HCT116 (cell line): ENCODE measurements at regions of chr22 and their contacts with region 1.

Region 1: DNA sequence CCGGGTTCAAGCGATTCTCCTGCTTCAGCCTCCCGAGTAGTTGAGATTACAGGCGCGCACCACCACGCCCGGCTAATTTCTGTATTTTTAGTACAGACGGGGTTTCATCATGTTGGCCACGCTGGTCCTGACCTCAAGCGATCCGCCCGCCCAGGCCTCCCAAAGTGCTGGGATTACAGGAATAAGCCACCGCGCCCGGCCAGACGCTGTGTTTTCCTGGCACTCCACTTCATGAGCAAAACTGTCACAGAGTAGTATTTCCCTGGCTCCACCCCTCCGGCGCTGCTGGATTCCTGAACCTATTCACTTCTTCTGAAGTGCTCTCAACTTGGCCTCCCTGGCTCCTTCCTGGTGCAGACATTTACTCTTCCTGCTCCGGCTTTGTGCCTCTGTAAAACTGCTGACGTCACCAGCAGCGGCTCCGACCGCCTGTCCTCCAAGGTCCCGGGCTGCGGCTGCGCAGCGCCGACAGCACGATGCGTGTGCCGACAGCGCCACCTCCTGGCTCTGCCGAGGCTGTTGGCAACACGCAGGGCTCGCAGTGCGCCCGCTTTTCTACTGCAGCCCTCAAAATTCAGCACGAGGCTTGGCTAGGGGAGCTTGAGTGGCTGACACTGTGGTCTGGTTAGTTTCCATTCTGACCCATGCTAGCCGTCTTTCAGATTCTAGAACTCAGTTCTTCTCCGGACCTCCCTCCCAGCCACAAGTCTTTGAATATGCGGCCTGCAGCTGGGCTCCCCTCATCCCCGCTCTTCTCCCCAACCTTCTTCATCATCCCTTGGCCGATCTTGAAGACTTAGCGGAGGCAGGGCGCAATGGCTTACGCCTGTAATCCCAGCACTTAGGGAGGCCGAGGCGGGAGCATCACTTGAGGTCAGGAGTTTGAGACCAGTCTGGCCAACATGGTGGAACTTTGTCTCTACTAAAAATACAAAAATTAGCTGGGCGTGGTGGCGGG is 36.6 kb downstream of the APOL3 start:
- DNase-seq: peak; percentile 83
- ATAC-seq: peak; percentile 98
- H3K4me3 ChIP-seq: peak overlapping the region in 1 of 2 experiments; percentile 33; a peak in 1 of 4 replicates
- H3K27ac ChIP-seq: peak overlapping the region; percentile 17; the same call in 1 of the 2 replicates
- H3K4me1 ChIP-seq: peaks cover 2 to 10% of the 10 kb centered on the region in 2 experiments; a peak in 3 of 4 replicates
- H3K27me3 ChIP-seq: peaks cover 3% of the 10 kb centered on the region
- CTCF ChIP-seq: peak; percentile 93 to 98 (median 96)
- POLR2A ChIP-seq: peak; percentile 33
- RAD21 ChIP-seq: peak; percentile 99

Region 2: GRCh38 chr22:35430897-35431322 is 693.0 kb before region 1 on chr22:
- CTCF ChIA-PET with region 1: interaction called, 3 read pairs
- POLR2A ChIA-PET with region 1: no interaction called
- RAD21 ChIA-PET with region 1: no interaction called
- intact Hi-C with region 1: loop called (anchors 10 kb)
- DNase-seq: peak; percentile 32
- ATAC-seq: peak; percentile 88
- H3K4me3 ChIP-seq: no peak overlapping the region
- H3K27ac ChIP-seq: peak overlapping the region; percentile 13; the same call in 1 of the 2 replicates
- H3K4me1 ChIP-seq: peaks cover 11 to 14% of the 10 kb centered on the region in 2 experiments
- H3K27me3 ChIP-seq: no peaks in the 10 kb centered on the region
- CTCF ChIP-seq: peak; percentile 75 to 98 (median 94)
- POLR2A ChIP-seq: no peak
- RAD21 ChIP-seq: peak; percentile 88

Region 3: GRCh38 chr22:35761037-35761436 is 362.9 kb before region 1 on chr22:
- CTCF ChIA-PET with region 1: no interaction called
- POLR2A ChIA-PET with region 1: no interaction called
- RAD21 ChIA-PET with region 1: no interaction called
- intact Hi-C with region 1: loop called (anchors 5 kb)
- DNase-seq: peak; percentile 8
- ATAC-seq: peak; percentile 58; the same call in 1 of the 2 replicates
- H3K4me3 ChIP-seq: no peak overlapping the region
- H3K27ac ChIP-seq: no peak overlapping the region
- H3K4me1 ChIP-seq: no peaks in the 10 kb centered on the region
- H3K27me3 ChIP-seq: no peaks in the 10 kb centered on the region
- CTCF ChIP-seq: peak in 2 of 3 experiments; percentile 19 to 35; a peak in 2 of 6 replicates
- POLR2A ChIP-seq: no peak
- RAD21 ChIP-seq: peak; percentile 56

Region 4: GRCh38 chr22:35930933-35931332 is 193.0 kb before region 1 on chr22:
- CTCF ChIA-PET with region 1: interaction called, 12 read pairs
- POLR2A ChIA-PET with region 1: no interaction called
- RAD21 ChIA-PET with region 1: interaction called, 3 to 4 read pairs
- intact Hi-C with region 1: loop called (anchors 1 kb)
- DNase-seq: peak; percentile 44
- ATAC-seq: peak; percentile 85
- H3K4me3 ChIP-seq: no peak overlapping the region
- H3K27ac ChIP-seq: no peak overlapping the region
- H3K4me1 ChIP-seq: no peaks in the 10 kb centered on the region
- H3K27me3 ChIP-seq: no peaks in the 10 kb centered on the region
- CTCF ChIP-seq: peak; percentile 54 to 85 (median 64)
- POLR2A ChIP-seq: no peak
- RAD21 ChIP-seq: peak; percentile 81

Region 5: DNA sequence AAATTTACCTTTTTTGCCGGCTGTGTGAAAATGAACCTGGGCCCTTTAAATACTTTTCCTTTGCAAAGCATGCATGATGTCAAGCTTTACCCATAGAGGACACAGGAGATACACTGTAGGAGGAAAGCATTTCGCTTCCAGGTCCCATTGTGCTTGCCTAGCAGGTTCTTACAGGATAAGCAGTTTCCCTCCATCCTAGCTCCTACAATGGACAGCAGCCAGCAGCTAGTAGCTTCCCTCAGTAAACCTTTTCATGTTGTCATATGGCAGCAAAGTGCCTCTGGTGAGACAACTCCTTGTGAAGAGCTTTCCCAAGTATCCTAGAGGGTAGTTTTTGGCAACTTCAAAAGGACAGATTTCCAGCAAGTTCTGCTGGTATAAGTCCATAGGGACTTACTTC is 173.7 kb before region 1 on chr22:
- CTCF ChIA-PET with region 1: no interaction called
- POLR2A ChIA-PET with region 1: no interaction called
- RAD21 ChIA-PET with region 1: no interaction called
- intact Hi-C with region 1: no loop called
- DNase-seq: no peak
- ATAC-seq: no peak
- H3K4me3 ChIP-seq: no peak overlapping the region
- H3K27ac ChIP-seq: no peak overlapping the region
- H3K4me1 ChIP-seq: no peaks in the 10 kb centered on the region
- H3K27me3 ChIP-seq: no peaks in the 10 kb centered on the region
- CTCF ChIP-seq: no peak
- POLR2A ChIP-seq: no peak
- RAD21 ChIP-seq: no peak

Region 6: DNA sequence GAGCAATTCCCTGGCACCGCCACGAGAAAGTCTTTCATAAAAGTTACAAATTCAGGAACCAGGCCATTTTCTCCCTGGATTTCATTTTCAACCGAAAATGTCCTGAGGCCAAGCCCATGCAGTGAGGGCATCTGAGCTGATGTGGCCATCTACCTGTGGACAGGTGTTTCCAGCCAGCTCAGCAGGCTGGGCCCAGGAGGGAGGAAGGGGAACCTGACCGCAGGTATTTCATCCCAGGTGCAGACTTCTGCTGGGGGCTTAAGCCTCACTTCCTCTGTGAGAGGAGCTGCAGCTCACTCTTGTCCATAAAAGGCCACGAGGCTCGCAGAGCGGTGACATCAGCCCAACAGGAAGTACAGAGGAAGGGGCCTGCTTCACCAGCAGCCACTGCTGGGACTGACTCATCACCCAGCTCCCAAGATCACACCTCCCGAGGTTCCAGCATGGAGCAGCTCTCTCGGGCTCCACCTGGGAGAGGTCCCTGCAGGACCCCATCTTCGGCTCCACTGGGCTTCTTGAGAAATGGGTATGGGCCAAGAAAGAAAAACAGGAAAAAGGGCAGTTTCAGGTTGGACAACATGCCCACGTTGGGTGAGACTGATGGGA is 207.5 kb after region 1 on chr22:
- CTCF ChIA-PET with region 1: no interaction called
- POLR2A ChIA-PET with region 1: no interaction called
- RAD21 ChIA-PET with region 1: no interaction called
- intact Hi-C with region 1: no loop called
- DNase-seq: peak; percentile 82
- ATAC-seq: peak; percentile 79
- H3K4me3 ChIP-seq: peak overlapping the region; percentile 4 to 10; a peak in 1 of 4 replicates
- H3K27ac ChIP-seq: peak overlapping the region; percentile 87
- H3K4me1 ChIP-seq: peaks cover 64 to 86% of the 10 kb centered on the region in 2 experiments
- H3K27me3 ChIP-seq: no peaks in the 10 kb centered on the region
- CTCF ChIP-seq: no peak
- POLR2A ChIP-seq: no peak
- RAD21 ChIP-seq: no peak